ENCODE measurements at regions of chr12 and their contacts with region 1.

Region 1: GRCh38 chr12:60494244-60494643 is 898.4 kb downstream of the SLC16A7 start:
- DNase-seq: peak; percentile 57
- H3K4me3 Mint-ChIP-seq: no peak overlapping the region
- H3K27ac Mint-ChIP-seq: no peak overlapping the region
- H3K4me1 Mint-ChIP-seq: no peaks in the 10 kb centered on the region
- H3K27me3 Mint-ChIP-seq: no peaks in the 10 kb centered on the region
- CTCF ChIP-seq: peak; percentile 70

Region 2: GRCh38 chr12:59403259-59403932 is 1090.8 kb before region 1 on chr12:
- CTCF ChIA-PET with region 1: no interaction called
- POLR2A ChIA-PET with region 1: interaction called, 3 read pairs
- intact Hi-C with region 1: loop called (anchors 1 kb)
- DNase-seq: peak; percentile 83
- H3K4me3 Mint-ChIP-seq: peak overlapping the region; percentile 4
- H3K27ac Mint-ChIP-seq: no peak overlapping the region
- H3K4me1 Mint-ChIP-seq: peaks cover 10% of the 10 kb centered on the region
- H3K27me3 Mint-ChIP-seq: no peaks in the 10 kb centered on the region
- CTCF ChIP-seq: peak; percentile 84

Region 3: DNA sequence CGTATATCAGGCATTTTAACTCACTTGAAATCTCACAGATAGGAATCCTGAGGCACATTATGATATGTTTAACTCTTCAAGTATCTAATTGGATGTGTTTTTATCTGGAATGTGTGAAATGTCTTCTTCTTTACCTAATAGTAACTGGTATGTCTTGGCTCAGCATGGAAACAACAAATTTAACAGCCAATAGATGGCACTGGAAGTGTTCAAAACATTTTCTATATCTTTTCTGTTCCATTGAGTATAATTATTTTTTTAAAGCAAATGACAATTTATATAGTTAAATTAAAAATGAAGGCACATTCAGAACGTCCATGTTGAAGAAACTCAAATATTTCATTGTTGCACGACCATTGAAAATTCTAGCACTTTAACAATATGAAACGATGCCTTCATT is 1063.0 kb before region 1 on chr12:
- CTCF ChIA-PET with region 1: no interaction called
- POLR2A ChIA-PET with region 1: interaction called, 3 read pairs
- intact Hi-C with region 1: loop called (anchors 1 kb)
- DNase-seq: peak; percentile 16
- H3K4me3 Mint-ChIP-seq: no peak overlapping the region
- H3K27ac Mint-ChIP-seq: no peak overlapping the region
- H3K4me1 Mint-ChIP-seq: no peaks in the 10 kb centered on the region
- H3K27me3 Mint-ChIP-seq: no peaks in the 10 kb centered on the region
- CTCF ChIP-seq: peak; percentile 29

Region 4: DNA sequence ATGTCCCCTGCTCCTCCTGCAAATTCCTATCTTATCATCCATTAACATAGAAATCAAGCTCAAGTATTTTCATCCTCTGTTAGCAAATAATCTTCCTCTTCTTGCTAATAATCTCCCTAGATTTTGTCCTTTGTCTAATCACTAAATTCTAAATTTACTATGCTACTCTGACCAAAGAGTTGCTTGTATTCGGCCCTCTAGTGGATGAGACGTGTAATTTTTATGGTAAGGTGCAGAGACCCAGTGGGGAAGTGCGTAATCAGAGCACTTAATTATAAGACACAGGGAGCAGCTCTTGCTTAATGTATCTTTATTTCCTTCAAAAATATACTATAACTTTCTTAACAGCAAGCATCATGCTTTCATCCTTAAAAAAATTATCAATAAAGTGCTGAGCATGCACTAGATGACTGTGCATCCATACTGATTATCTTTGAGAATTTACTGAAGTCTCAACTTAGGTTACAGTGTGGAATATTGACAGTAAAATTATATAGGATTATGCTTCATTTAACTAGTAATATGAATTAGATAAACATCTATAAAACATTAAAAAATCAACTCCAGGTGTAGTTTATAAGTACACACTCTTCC is 685.8 kb before region 1 on chr12:
- CTCF ChIA-PET with region 1: interaction called, 3 read pairs
- POLR2A ChIA-PET with region 1: no interaction called
- intact Hi-C with region 1: loop called (anchors 10 kb)
- DNase-seq: peak; percentile 51
- H3K4me3 Mint-ChIP-seq: no peak overlapping the region
- H3K27ac Mint-ChIP-seq: no peak overlapping the region
- H3K4me1 Mint-ChIP-seq: peaks cover 7% of the 10 kb centered on the region
- H3K27me3 Mint-ChIP-seq: no peaks in the 10 kb centered on the region
- CTCF ChIP-seq: peak; percentile 68

Region 5: GRCh38 chr12:59895166-59895775 is 599.0 kb before region 1 on chr12:
- CTCF ChIA-PET with region 1: no interaction called
- POLR2A ChIA-PET with region 1: no interaction called
- intact Hi-C with region 1: no loop called
- DNase-seq: no peak
- H3K4me3 Mint-ChIP-seq: no peak overlapping the region
- H3K27ac Mint-ChIP-seq: no peak overlapping the region
- H3K4me1 Mint-ChIP-seq: no peaks in the 10 kb centered on the region
- H3K27me3 Mint-ChIP-seq: no peaks in the 10 kb centered on the region
- CTCF ChIP-seq: no peak

Region 6: GRCh38 chr12:60106214-60106613 is 388.0 kb before region 1 on chr12:
- CTCF ChIA-PET with region 1: interaction called, 6 read pairs
- POLR2A ChIA-PET with region 1: interaction called, 4 read pairs
- intact Hi-C with region 1: loop called (anchors 1 kb)
- DNase-seq: peak; percentile 17
- H3K4me3 Mint-ChIP-seq: no peak overlapping the region
- H3K27ac Mint-ChIP-seq: no peak overlapping the region
- H3K4me1 Mint-ChIP-seq: no peaks in the 10 kb centered on the region
- H3K27me3 Mint-ChIP-seq: no peaks in the 10 kb centered on the region
- CTCF ChIP-seq: peak; percentile 49

Region 7: DNA sequence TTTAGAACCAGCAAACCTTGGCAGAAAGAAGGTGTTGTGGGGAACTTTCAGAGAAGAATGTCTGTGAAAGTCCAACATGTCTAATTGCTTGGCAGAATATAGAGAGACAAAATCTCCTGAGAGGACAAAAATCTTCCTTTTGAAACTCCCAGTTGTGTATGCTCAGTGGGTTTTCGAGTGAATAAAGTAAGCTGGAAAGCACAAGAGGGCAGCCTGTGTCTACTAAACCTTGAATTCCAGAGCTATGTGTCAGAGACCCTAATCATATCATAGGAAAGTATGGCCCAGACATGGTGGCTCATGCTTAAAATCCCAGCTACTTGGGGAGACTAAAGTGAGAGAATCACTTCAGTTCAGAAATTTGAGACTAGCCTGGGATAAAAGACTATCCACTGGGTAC is 237.2 kb before region 1 on chr12:
- CTCF ChIA-PET with region 1: interaction called, 3 read pairs
- POLR2A ChIA-PET with region 1: no interaction called
- intact Hi-C with region 1: loop called (anchors 2 kb)
- DNase-seq: peak; percentile 43
- H3K4me3 Mint-ChIP-seq: no peak overlapping the region
- H3K27ac Mint-ChIP-seq: no peak overlapping the region
- H3K4me1 Mint-ChIP-seq: no peaks in the 10 kb centered on the region
- H3K27me3 Mint-ChIP-seq: no peaks in the 10 kb centered on the region
- CTCF ChIP-seq: peak; percentile 16

Measured in MCF 10A (cell line).